ENCODE measurements at regions of chrX and their contacts with region 1.

Region 1: DNA sequence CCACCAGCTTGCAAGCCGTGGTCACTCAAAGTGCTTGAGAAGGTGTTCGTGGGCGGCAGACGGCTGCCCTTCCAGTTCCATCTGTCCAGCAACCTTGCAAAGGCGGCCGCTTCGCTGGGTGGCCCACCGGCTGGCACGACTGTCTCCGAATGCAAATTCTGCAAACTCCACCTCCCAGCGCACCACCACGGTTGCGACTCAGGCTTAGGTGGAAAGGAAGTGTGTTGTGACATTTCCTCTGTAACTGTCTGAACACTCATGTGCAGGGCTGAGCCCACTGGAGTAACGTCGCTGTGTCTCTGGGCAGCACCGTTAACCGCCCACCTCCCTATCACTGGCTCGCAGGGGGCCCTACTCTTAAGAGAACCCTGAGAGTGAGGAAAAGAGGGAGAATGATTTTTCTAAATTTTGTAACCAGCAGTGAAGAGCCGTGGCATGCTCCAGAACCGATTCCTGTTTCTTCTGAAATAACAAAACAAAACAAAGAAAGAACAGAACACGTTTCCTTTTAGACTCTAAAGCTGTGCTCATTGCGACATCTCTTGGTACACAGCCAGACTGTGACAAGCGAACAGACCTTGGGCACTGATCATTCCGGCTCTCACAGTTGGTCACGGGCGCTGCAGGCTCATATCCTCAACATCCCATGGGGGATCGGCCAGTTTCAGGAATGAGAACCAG is at the start of gene P2RY8:
- DNase-seq: peak; percentile 89
- H3K4me3 Mint-ChIP-seq: peak within 1 kb of the TSS; percentile 91
- H3K27ac Mint-ChIP-seq: peak within 1 kb of the TSS; percentile 97
- H3K4me1 Mint-ChIP-seq: peaks cover 15% of the 10 kb centered on the region
- H3K27me3 Mint-ChIP-seq: no peaks in the 10 kb centered on the region
- total RNA-seq, gene P2RY8: 9.8 to 10.6 TPM

Region 2: GRCh38 chrX:1246816-1247215 is 290.4 kb before region 1 on chrX:
- CTCF ChIA-PET with region 1: no interaction called
- intact Hi-C with region 1: loop called (anchors 1 kb)
- DNase-seq: peak; percentile 94
- H3K4me3 Mint-ChIP-seq: no peak overlapping the region
- H3K27ac Mint-ChIP-seq: no peak overlapping the region
- H3K4me1 Mint-ChIP-seq: peaks cover 33% of the 10 kb centered on the region
- H3K27me3 Mint-ChIP-seq: no peaks in the 10 kb centered on the region

Region 3: DNA sequence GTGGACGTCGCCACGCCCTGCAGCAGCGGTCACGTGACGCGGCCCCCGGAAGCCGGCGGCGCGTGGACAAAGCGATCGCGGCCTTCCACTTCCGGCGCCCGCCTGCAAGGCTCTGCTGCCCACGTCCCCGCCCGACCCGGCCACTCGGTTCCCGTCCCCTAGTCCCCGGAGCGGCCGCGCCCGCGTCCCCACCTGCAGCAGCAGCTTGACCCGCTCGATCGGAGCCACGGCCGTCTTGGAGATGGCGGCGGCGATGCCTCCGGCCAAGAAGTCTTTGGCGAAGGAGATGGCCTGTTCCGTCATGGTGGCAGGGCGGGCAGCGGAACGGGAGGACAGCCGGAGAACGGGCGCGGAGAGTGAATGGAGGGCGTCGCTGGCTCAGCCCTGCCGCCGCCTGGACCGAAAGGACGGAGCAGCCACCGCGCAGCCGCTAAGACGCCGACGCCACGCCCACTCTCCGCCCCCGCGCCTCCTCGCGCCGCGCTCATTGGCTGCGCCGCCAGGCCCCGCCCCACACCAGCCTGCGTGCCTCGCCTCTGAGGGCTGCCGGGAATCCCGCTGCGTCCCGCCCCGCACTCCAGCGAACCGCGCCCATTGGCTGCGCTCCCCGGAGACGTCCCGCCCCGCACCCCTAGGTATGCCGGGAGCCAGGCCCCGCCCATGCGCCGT is 145.3 kb before region 1 on chrX and contains the start of gene SLC25A6:
- CTCF ChIA-PET with region 1: no interaction called
- intact Hi-C with region 1: loop called (anchors 1 kb)
- DNase-seq: peak; percentile 99
- H3K4me3 Mint-ChIP-seq: peak within 1 kb of the TSS; percentile 91
- H3K27ac Mint-ChIP-seq: peak within 1 kb of the TSS; percentile 90
- H3K4me1 Mint-ChIP-seq: peaks cover 63% of the 10 kb centered on the region
- H3K27me3 Mint-ChIP-seq: no peaks in the 10 kb centered on the region
- total RNA-seq, gene SLC25A6: 457 to 463 TPM

Region 4: DNA sequence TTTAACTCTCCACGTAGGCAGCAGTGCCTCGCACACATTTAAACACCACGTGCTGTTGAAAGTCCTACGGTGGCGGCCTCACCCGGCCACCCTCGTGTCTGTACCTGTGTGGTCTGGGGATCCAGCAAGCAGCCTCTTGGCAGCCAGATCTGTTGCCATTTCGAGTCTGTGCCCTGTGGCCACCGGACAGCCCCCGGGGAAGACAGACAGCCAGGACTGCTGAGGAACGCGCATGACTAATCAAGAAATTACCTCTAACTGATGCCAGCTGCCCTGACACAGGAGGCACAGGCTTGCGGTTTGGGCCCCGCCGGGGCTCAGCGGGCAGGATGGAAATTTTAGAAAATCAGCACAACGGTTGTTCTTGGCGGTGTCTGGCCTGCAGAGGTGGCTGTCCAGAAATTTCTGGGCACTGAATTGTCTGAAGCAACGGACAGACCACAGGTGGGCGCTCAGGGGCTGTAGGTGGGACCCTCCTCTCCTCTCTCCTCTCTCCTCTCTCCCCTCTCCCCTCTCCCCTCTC is 68.9 kb before region 1 on chrX:
- CTCF ChIA-PET with region 1: no interaction called
- intact Hi-C with region 1: loop called (anchors 1 kb)
- DNase-seq: peak; percentile 93
- H3K4me3 Mint-ChIP-seq: peak overlapping the region; percentile 60
- H3K27ac Mint-ChIP-seq: peak overlapping the region; percentile 77
- H3K4me1 Mint-ChIP-seq: peaks cover 80% of the 10 kb centered on the region
- H3K27me3 Mint-ChIP-seq: no peaks in the 10 kb centered on the region

Region 5: GRCh38 chrX:1521459-1521956 is 15.7 kb before region 1 on chrX:
- CTCF ChIA-PET with region 1: no interaction called
- intact Hi-C with region 1: loop called (anchors 1 kb)
- DNase-seq: peak; percentile 85
- H3K4me3 Mint-ChIP-seq: peak overlapping the region; percentile 74
- H3K27ac Mint-ChIP-seq: peak overlapping the region; percentile 75
- H3K4me1 Mint-ChIP-seq: peaks cover 51% of the 10 kb centered on the region
- H3K27me3 Mint-ChIP-seq: no peaks in the 10 kb centered on the region

Region 6: GRCh38 chrX:1554469-1555210 is 17.5 kb after region 1 on chrX:
- CTCF ChIA-PET with region 1: no interaction called
- intact Hi-C with region 1: no loop called
- DNase-seq: peak; percentile 41
- H3K4me3 Mint-ChIP-seq: peak overlapping the region; percentile 26
- H3K27ac Mint-ChIP-seq: peak overlapping the region; percentile 79
- H3K4me1 Mint-ChIP-seq: peaks cover 49% of the 10 kb centered on the region
- H3K27me3 Mint-ChIP-seq: no peaks in the 10 kb centered on the region

Region 7: GRCh38 chrX:1580735-1581531 is 43.8 kb after region 1 on chrX:
- CTCF ChIA-PET with region 1: no interaction called
- intact Hi-C with region 1: loop called (anchors 1 kb)
- DNase-seq: peak; percentile 92
- H3K4me3 Mint-ChIP-seq: no peak overlapping the region
- H3K27ac Mint-ChIP-seq: no peak overlapping the region
- H3K4me1 Mint-ChIP-seq: peaks cover 18% of the 10 kb centered on the region
- H3K27me3 Mint-ChIP-seq: no peaks in the 10 kb centered on the region

Region 8: DNA sequence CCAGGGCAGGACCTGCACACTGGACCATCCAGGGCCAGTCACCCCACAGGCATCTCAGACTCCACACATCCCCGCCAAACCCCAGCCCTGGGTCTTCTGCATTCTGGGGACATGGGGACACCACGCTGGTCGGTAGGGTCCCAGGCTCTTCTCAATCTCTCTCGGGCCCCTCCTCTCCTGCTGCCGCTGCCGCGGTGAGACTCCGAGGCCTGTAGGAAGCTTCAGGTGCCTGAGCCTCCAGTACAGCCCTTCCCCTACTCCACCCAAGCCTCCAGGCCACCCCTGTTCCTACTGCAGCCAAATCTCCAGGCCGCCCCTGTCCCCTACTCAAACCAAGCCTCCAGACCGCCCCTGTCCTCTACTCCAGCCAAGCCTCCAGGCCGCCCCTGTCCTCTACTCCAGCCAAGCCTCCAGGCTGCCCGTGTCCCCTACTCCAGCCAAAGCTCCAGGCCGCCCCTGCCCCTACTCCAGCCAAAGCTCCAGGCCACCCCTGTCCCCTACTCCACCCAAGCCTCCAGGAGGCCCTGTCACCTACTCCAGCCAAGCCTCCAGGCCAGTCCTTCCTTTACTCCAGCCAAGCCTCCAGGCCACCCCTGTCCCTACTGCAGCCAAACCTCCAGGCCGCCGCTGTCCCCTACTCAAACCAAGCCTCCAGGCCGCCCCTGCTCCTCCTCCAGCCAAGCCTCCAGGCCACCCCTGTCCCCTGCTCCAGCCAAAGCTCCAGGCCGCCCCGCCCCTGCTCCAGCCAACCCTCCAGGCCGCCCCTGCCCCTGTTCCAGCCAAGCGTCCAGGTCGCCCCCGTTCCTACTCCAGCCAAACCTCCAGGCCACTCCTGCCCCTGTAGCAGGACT is 72.4 kb after region 1 on chrX:
- CTCF ChIA-PET with region 1: no interaction called
- intact Hi-C with region 1: no loop called
- DNase-seq: no peak
- H3K4me3 Mint-ChIP-seq: no peak overlapping the region
- H3K27ac Mint-ChIP-seq: no peak overlapping the region
- H3K4me1 Mint-ChIP-seq: peaks cover 2% of the 10 kb centered on the region
- H3K27me3 Mint-ChIP-seq: no peaks in the 10 kb centered on the region